Ascending aorta (tissue), 2 donors: ENCODE measurements at regions of chrX and their contacts with region 1.

Region 1: DNA sequence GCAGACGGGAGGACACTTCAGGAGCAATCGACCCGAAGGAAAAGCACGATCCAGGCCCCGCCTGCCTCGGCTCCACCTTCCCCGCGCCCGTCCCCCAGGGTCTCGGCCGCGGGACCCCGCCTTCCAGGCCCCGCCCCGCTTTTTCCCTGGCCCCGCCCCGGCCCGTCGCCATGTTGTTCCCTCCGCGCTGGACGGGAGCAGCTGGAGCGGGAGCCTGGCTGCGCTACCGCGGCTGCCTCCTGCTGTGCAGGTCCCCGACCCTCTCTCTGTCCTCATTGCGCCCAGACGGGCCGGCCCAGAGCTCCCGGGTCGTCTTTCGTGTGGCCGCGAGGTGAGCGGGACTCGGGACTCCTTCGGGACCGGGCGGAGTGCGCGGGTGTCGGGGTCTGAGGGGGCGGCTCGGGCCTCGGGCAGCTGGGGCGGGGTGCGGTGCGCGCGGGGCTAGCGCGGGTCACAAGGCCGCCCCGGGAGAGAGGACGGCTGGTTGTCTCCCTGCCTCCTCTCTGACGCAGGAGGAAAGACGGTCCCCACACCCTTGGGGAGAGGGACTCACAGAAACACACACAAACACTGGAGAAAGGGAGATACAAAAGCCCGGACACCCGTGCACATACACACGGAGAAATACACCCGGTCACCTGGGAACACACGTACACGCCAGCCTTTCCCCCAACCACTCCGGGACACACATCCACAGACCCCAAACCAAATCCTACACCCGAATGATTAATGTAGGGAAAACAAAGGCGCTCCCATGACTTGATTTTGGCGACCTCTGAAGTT is at the start of gene RAB9A:
- DNase-seq: peak; percentile 52 to 92
- H3K4me3 ChIP-seq: peak within 1 kb of the TSS; percentile 80 to 91
- H3K27ac ChIP-seq: peak within 1 kb of the TSS; percentile 88 to 91
- H3K4me1 ChIP-seq: peaks cover 0 to 4% of the 10 kb centered on the region in 2 donors
- H3K27me3 ChIP-seq: no peaks in the 10 kb centered on the region
- CTCF ChIP-seq: no peak
- total RNA-seq, gene RAB9A: 1.5 TPM

Region 2: GRCh38 chrX:13520936-13521335 is 168.2 kb before region 1 on chrX:
- intact Hi-C with region 1: no loop called
- DNase-seq: no peak
- H3K4me3 ChIP-seq: no peak overlapping the region
- H3K27ac ChIP-seq: peak overlapping the region; percentile 60 to 69
- H3K4me1 ChIP-seq: peaks cover 0 to 3% of the 10 kb centered on the region in 2 donors
- H3K27me3 ChIP-seq: no peaks in the 10 kb centered on the region
- CTCF ChIP-seq: no peak

Region 3: GRCh38 chrX:13664026-13664425 is 25.1 kb before region 1 on chrX:
- intact Hi-C with region 1: loop called (anchors 1 kb)
- DNase-seq: no peak
- H3K4me3 ChIP-seq: no peak overlapping the region
- H3K27ac ChIP-seq: peak overlapping the region; percentile 57 to 61
- H3K4me1 ChIP-seq: peaks cover 0 to under 1% of the 10 kb centered on the region in 2 donors
- H3K27me3 ChIP-seq: no peaks in the 10 kb centered on the region
- CTCF ChIP-seq: no peak

Region 4: DNA sequence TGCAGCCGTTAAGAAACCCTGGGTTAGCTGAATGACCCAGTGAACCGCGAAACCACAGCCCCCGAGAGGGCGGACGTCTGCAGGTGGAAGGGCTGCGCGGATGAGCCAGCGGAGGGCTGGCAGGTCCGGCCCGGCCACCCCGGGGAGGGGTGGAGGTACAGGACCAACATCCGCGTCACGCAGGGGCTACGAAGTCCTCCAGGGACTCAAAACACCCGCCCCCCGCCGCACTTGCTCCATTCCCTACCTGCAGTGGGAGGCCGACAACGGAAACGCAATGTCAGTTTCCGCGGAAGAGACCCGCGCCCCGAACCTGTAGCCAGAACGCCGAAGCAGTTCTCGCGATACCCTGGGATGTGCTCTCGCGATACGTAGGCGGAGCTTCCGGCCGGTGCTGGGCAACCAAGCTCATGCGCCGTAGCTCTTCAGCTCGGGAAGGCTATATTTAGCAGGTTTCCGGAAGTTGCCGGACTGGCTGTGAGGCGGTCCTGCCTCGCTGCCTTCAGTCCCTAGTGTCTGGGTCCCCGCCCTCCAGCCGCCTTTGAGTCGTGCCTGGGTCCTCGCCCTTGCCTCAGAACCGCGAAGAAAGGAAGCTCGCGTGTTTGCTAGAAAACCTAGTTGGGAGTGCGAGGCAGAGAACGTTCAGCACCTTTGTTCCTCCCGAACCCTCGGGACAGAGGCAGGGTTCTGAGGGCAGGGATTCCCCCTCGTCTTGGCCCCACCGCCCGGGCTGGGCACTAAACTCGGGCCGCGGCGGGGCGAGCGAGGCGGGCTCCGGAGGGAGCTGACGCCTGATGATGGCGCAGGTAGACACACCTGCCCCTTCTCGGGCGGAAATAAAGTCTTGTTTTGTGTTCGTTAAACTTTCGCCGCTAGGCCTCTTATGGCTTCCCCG is 45.4 kb after region 1 on chrX and contains the starts of genes OFD1 and TRAPPC2:
- intact Hi-C with region 1: loop called (anchors 2 kb)
- DNase-seq: peak; percentile 82 to 98
- H3K4me3 ChIP-seq: peak within 1 kb of the TSS; percentile 70 to 80
- H3K27ac ChIP-seq: peak within 1 kb of the TSS; percentile 82 to 84
- H3K4me1 ChIP-seq: peaks cover 0 to 6% of the 10 kb centered on the region in 2 donors
- H3K27me3 ChIP-seq: no peaks in the 10 kb centered on the region
- CTCF ChIP-seq: no peak
- total RNA-seq, gene OFD1: 8.4 TPM
- total RNA-seq, gene TRAPPC2: 8.0 TPM